CD8-positive, alpha-beta T cell (primary cell): ENCODE measurements at regions of chr12 and their contacts with region 1.

Region 1: DNA sequence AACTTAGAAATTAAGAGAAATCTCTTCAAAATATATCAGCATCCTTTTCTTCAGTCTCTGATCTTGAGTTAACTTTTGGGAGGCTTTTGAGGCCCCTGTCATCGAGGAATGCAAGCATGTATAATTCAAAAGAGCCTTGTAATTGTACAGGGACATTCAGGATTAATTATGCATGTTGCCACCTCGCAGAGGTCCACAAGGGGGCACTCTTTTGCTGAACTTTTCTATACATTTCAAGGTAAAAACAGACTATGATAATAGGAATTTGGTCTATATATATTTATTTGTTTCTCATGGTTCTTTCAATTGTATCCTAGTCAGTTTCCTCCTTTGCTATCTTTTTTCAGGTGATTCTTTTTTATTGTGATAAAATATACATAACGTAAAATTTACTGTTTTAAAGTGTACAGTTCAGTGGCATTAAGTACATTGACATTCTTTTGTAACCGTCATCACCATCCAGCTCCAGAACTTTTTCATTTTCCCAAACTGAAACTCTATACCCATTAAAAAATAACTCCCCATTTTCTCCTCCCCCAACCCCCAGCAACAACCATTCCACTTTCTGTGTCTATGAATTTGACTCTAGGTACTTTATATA is 47.0 kb upstream of the SLC2A13 start:
- DNase-seq: peak; percentile 3 to 58 (median 36)
- ATAC-seq: no peak
- H3K4me3 ChIP-seq: no peak overlapping the region
- H3K4me3 Mint-ChIP-seq: no peak overlapping the region
- H3K27ac ChIP-seq: no peak overlapping the region
- H3K27ac Mint-ChIP-seq: no peak overlapping the region
- H3K4me1 ChIP-seq: no peaks in the 10 kb centered on the region
- H3K4me1 Mint-ChIP-seq: no peaks in the 10 kb centered on the region
- H3K27me3 ChIP-seq: no peaks in the 10 kb centered on the region
- H3K27me3 Mint-ChIP-seq: peaks cover 6% of the 10 kb centered on the region
- CTCF ChIP-seq: peak; percentile 97

Region 2: DNA sequence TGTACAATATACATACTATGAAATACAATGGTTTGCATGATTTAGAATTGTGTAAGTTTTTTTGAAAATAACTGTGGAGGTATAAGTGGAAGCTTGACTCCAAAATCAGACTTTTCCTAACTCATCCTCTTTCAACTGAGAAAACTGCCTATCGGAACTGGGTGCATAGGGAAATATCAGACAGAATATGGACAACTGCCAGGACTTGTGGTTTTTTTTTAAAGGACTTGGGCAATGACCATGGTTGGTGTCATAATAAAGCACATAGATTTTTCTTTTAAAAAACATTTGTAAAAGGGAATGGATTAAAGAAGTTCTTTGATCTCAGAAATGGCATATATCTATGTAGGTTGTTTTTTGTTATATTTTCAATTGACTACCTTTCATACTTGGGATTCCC is 18.6 kb after region 1 on chr12:
- CTCF ChIA-PET with region 1: no interaction called
- POLR2A ChIA-PET with region 1: no interaction called
- intact Hi-C with region 1: no loop called
- DNase-seq: no peak
- ATAC-seq: no peak
- H3K4me3 ChIP-seq: no peak overlapping the region
- H3K4me3 Mint-ChIP-seq: no peak overlapping the region
- H3K27ac ChIP-seq: no peak overlapping the region
- H3K27ac Mint-ChIP-seq: no peak overlapping the region
- H3K4me1 ChIP-seq: no peaks in the 10 kb centered on the region
- H3K4me1 Mint-ChIP-seq: peaks cover 4% of the 10 kb centered on the region
- H3K27me3 ChIP-seq: no peaks in the 10 kb centered on the region
- H3K27me3 Mint-ChIP-seq: no peaks in the 10 kb centered on the region
- CTCF ChIP-seq: no peak

Region 3: GRCh38 chr12:40312982-40313576 is 160.2 kb after region 1 on chr12:
- CTCF ChIA-PET with region 1: interaction called, 3 read pairs
- POLR2A ChIA-PET with region 1: no interaction called
- intact Hi-C with region 1: loop called (anchors 2 kb)
- DNase-seq: no peak
- ATAC-seq: no peak
- H3K4me3 ChIP-seq: no peak overlapping the region
- H3K4me3 Mint-ChIP-seq: no peak overlapping the region
- H3K27ac ChIP-seq: no peak overlapping the region
- H3K27ac Mint-ChIP-seq: no peak overlapping the region
- H3K4me1 ChIP-seq: no peaks in the 10 kb centered on the region
- H3K4me1 Mint-ChIP-seq: no peaks in the 10 kb centered on the region
- H3K27me3 ChIP-seq: no peaks in the 10 kb centered on the region
- H3K27me3 Mint-ChIP-seq: no peaks in the 10 kb centered on the region
- CTCF ChIP-seq: no peak

Region 4: GRCh38 chr12:40921563-40922163 is 768.8 kb after region 1 on chr12:
- CTCF ChIA-PET with region 1: no interaction called
- POLR2A ChIA-PET with region 1: no interaction called
- intact Hi-C with region 1: loop called in 1 of 2 experiments (anchors 10 kb)
- DNase-seq: no peak
- ATAC-seq: no peak
- H3K4me3 ChIP-seq: no peak overlapping the region
- H3K4me3 Mint-ChIP-seq: no peak overlapping the region
- H3K27ac ChIP-seq: no peak overlapping the region
- H3K27ac Mint-ChIP-seq: no peak overlapping the region
- H3K4me1 ChIP-seq: no peaks in the 10 kb centered on the region
- H3K4me1 Mint-ChIP-seq: no peaks in the 10 kb centered on the region
- H3K27me3 ChIP-seq: no peaks in the 10 kb centered on the region
- H3K27me3 Mint-ChIP-seq: no peaks in the 10 kb centered on the region
- CTCF ChIP-seq: peak; percentile 38